ENCODE measurements at regions of chr7 and their contacts with region 1.

Region 1: DNA sequence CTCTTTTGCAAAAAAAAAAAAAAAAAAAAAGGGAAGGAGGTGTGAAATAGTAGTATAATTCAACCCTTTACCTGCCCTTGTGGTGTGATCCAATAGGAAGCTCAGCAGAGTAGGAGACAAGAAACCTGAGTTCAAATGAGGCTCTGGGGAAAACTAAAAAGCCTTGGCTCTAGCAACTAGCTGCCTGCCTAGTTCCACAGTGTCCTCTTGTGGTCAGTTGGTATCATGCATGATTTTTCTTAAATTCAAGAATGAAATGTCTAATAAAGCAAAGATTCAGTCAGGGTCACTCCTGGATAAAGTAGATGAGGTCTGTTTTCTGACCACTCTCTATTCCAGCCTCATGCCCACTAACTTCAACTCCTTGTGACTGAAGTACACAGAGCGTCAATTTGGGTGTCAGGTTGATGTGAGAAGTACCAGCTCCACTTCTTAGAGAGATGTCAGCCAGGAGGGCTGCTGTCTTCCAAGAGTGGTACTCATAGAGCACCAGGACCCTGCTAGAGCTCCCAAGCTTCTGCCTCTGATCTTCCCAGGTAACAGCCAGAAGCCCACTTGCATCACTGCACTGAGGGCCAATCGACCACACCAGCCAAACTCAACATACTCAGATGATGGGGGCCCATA is 10.5 kb downstream of the LSM5 start:
- DNase-seq: peak in 16 of 42 donors; percentile 3 to 60 (median 30)

Region 2: DNA sequence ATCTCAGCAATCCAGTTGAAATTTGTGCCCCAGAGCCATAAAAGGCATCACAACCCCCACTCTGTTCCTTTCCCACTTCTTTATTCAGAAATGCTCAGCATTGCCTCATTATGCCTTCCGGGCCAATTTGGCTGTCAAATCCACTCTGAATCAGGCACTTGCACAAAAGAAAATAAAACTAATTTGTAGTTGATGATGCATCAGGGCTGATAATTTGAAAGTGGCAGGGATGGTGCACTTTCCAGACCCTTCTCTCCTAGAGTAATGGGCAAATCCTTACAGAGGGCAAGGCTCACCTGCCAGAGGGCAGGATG is 261.6 kb before region 1 on chr7:
- intact Hi-C with region 1: loop called (anchors 10 kb)
- DNase-seq: peak in 29 of 42 donors; percentile 14 to 84 (median 48)

Region 3: DNA sequence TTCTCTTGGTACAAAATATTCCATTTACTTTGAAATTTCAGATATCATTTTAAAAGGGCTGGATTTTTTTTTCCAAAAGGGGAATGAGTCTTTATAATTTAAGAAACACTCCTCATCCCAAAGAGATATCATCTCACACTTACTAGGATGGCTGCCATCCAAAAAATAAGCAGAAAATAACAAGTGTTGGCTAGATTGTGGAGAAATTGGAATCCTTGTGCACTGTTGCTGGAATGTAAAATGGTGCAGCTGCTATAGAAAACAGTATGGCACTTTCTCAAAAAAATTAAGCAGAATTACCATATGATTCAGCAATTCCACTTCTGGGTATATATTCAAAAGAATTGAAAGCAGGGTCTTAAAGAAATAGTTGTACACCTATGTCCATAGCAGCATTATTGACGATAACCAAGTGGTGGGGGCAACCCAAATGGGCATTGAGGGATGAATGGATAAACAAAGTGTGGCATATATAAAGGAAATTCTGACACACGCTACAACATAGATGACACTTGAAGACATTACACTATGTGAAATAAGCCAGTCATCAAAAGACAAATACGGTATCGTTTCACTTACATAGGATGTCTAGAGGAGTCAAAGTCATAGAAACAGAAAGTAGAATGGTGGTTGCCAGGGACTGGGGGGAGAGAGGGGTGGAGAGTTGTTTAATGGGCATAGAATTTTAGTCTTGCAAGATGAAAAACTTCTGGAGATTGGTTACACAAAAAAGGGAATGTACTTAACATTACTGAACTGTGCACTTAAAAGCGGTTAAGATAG is 43.4 kb before region 1 on chr7:
- intact Hi-C with region 1: no loop called
- DNase-seq: no peak

Region 4: GRCh38 chr7:32500922-32501341 is 21.2 kb after region 1 on chr7:
- intact Hi-C with region 1: no loop called
- DNase-seq: peak in 5 of 42 donors; percentile 12 to 47 (median 17)